Sciatic nerve (tissue), 2 donors: ENCODE measurements at regions of chr6 and their contacts with region 1.

Region 1: DNA sequence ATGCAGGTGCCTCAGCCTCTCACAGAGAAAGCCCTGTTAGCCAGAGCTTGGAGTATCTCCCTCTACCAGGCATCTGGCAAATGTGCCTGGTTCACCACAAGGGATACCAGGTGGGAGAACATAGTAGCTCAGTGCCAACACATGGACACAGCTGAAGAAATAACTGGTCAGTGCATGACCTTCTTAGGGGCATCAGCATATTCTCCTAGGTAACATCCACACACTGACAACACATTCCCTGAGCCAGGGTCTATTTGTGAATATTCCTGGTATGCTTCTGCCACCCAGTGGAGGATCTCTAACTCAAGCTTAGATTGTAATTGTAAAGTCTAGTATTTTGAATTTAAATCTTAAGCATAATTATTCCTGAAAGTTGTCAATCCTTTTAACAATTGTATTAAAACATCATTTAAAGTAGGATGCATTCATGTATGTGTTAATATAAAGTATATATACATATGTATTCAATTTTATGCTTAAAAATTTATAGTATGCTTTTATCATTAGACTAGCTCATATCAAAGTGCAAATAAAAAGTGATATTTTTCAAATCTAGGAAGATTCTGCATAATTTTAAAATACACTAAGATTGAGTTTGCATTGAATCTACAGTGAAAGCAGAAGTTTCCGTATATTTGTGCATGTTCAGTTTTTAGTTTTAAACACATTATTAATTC is 45.3 kb upstream of the COL21A1 start:
- DNase-seq: no peak
- ATAC-seq: peak; percentile 96

Region 2: DNA sequence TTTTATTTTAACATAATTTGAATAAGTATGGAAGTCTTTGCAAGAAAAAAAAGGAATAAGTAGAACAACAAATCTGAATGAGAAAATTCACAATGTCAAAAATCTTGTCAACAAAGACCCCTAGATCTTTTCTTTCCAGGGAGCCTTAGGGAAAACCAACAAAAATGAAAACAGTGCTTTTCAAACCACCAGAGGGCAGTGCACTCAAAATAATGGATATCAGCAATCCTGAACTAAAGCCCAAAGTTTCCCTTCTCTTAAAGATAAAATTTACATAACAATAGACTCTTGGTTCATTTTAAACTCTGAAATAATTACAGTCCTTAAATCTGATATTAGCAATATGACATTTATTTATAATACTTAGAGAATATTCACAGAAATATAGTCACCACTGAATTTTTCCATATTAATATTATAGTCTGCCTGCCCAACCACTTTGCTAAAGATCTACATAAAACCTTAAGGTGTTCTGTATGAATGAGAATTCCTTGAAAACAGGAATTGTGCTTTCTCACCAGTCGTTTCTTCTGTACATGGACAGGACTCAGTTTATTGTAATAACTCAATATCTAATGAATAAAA is 311.9 kb before region 1 on chr6:
- intact Hi-C with region 1: loop called (anchors 5 kb)
- DNase-seq: no peak
- ATAC-seq: peak; percentile 51

Region 3: GRCh38 chr6:56220083-56220482 is 72.6 kb before region 1 on chr6:
- intact Hi-C with region 1: no loop called
- DNase-seq: no peak
- ATAC-seq: no peak